Activated CD4-positive, alpha-beta T cell treated with anti-CD3 and anti-CD28 coated beads for 36 hours (primary cell): ENCODE measurements at regions of chr1 and their contacts with region 1.

Region 1: DNA sequence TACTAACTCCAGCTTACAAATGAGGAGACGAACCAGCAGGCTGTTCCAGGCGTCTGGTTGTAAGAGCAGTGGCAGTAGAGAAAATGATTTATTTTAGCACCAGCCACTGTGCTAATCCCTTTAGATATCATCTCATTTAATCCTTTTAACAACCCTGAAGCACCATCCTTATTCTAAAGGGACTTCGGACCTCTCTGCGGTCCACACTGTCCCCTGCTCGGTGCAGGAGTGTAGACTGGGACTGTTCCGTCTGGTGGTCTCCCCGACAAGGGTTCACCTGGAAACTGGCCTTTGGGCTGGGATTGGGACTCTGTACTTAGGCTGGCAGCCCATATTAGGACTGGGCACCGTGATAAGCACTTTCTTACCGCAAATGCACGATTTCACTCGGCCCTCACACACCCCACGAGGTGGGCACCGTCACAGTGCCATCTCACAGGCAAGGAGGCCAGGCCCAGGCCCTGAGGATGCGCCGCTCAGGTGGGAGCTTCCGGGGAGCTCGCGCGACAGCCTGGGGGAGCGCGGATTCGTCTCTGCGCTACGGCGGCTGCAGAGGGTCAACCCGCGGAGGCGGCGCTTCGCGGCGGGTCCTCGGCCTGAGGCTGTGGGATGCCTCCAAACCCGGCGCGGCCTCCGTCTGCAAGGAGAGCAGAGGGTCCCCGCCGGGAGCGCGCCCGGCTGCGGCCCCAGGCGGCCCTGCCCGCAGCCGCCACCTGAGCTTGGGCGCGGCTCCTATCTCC is 45.2 kb downstream of the ATP1A1 start:
- DNase-seq: peak; percentile 92
- ATAC-seq: peak; percentile 88
- H3K4me3 Mint-ChIP-seq: peak overlapping the region; percentile 92
- H3K27ac Mint-ChIP-seq: peak overlapping the region; percentile 88
- H3K4me1 Mint-ChIP-seq: peaks cover 32% of the 10 kb centered on the region
- H3K27me3 Mint-ChIP-seq: no peaks in the 10 kb centered on the region

Region 2: GRCh38 chr1:116372587-116373444 is 45.4 kb before region 1 on chr1 and contains the start of gene ATP1A1:
- CTCF ChIA-PET with region 1: interaction called, 12 read pairs
- POLR2A ChIA-PET with region 1: interaction called, 3 read pairs
- intact Hi-C with region 1: loop called (anchors 1 kb)
- DNase-seq: peak; percentile 99
- ATAC-seq: peak; percentile 55
- H3K4me3 Mint-ChIP-seq: peak within 1 kb of the TSS; percentile 93
- H3K27ac Mint-ChIP-seq: peak within 1 kb of the TSS; percentile 98
- H3K4me1 Mint-ChIP-seq: peaks cover 33% of the 10 kb centered on the region
- H3K27me3 Mint-ChIP-seq: no peaks in the 10 kb centered on the region
- total RNA-seq, gene ATP1A1: 247 to 257 TPM

Region 3: GRCh38 chr1:116397728-116398127 is 20.5 kb before region 1 on chr1:
- CTCF ChIA-PET with region 1: no interaction called
- POLR2A ChIA-PET with region 1: no interaction called
- intact Hi-C with region 1: loop called in 1 of 2 experiments (anchors 2 kb)
- DNase-seq: no peak
- ATAC-seq: no peak
- H3K4me3 Mint-ChIP-seq: no peak overlapping the region
- H3K27ac Mint-ChIP-seq: no peak overlapping the region
- H3K4me1 Mint-ChIP-seq: peaks cover 7% of the 10 kb centered on the region
- H3K27me3 Mint-ChIP-seq: no peaks in the 10 kb centered on the region

Region 4: DNA sequence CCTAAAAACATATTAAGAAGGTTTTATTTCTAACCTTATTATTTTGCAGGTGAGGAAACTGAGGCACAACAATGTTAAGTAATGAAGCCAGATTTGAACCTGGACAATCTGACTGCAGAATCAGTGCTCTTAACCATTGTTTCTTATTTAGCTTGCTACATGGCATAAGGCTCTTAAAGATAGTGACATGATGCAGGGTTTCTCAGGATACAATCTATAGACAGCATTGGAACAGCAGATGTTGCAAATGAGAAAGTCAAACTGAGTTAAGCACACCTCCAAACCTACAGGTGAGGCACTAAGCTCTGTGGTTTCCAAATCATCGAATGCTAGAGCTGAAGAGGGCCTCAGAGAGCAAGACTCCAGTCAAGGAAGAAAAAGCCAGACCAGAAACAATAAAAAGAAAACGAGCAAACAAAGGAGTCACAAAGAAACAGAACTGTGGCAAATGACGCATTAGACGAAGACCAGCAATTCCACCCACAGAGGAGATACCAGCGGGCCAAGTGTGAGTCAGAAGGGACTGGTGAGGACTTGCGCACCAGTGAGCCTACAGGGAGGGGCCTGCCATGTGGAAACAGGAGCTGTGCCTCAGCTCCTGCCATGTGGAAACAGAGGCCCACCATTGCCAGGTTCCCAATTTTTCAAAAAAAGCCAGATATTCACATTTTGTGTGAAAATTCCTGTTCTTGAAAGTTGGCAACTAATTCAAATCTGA is 138.2 kb after region 1 on chr1:
- CTCF ChIA-PET with region 1: no interaction called
- POLR2A ChIA-PET with region 1: no interaction called
- intact Hi-C with region 1: loop called (anchors 5 to 10 kb)
- DNase-seq: peak; percentile 88
- ATAC-seq: peak; percentile 92
- H3K4me3 Mint-ChIP-seq: no peak overlapping the region
- H3K27ac Mint-ChIP-seq: peak overlapping the region; percentile 87
- H3K4me1 Mint-ChIP-seq: peaks cover 73% of the 10 kb centered on the region
- H3K27me3 Mint-ChIP-seq: no peaks in the 10 kb centered on the region

Region 5: GRCh38 chr1:117929173-117929989 is 1511.1 kb after region 1 on chr1 and contains the starts of genes GDAP2 and WDR3:
- CTCF ChIA-PET with region 1: no interaction called
- POLR2A ChIA-PET with region 1: no interaction called
- intact Hi-C with region 1: loop called in 1 of 2 experiments (anchors 5 kb)
- DNase-seq: peak; percentile 98
- ATAC-seq: peak; percentile 97
- H3K4me3 Mint-ChIP-seq: peak within 1 kb of the TSS; percentile 94
- H3K27ac Mint-ChIP-seq: peak within 1 kb of the TSS; percentile 90
- H3K4me1 Mint-ChIP-seq: peaks cover 54% of the 10 kb centered on the region
- H3K27me3 Mint-ChIP-seq: no peaks in the 10 kb centered on the region
- total RNA-seq, gene GDAP2: 18.8 to 20.9 TPM
- total RNA-seq, gene WDR3: 45.0 to 63.7 TPM